ENCODE measurements at regions of chr16 and their contacts with region 1.

Region 1: DNA sequence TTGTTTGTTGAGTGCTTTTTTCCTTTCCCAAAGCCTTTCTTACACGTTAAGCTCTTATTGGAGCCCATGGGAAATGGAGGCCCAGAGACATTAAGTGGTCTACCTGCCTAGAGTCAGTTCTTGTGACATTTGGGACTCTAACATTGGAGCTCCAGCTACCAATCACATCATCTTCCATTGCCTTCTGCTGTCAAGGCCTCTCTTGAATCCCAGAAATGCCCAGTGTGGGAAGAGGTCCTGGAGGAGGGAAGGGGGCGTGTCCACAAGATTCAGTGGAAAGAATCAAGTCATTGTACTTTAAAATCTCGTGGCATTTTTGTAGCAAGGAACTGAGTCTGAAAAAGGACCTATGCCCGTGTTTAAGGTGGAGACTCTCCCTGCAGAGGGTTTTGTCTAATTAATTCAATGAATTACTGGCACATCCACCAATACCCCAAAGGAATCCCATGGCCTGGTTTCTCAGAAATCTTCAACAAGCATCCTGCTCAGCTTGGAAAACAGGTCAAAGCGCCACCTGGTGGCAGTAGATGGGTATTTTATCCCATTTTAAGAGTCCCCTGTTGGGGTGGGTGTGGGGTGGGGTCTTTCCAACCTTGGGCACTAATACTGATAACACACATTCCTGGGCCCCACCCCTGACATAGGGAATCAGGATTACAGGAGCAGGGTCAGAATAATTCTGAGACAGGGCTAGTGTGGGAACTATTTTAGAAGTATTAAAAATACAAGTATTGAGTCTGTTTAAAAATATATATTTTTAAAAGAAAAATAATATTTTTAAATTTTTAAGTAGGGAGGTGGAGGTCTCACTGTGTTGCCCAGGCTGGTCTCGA is 24.6 kb downstream of the GPT2 start:
- DNase-seq: no peak
- ATAC-seq: peak; percentile 68
- H3K4me3 ChIP-seq: no peak overlapping the region
- H3K27ac ChIP-seq: no peak overlapping the region
- H3K4me1 ChIP-seq: no peaks in the 10 kb centered on the region
- H3K27me3 ChIP-seq: no peaks in the 10 kb centered on the region

Region 2: GRCh38 chr16:46673320-46674013 is 235.3 kb before region 1 on chr16:
- intact Hi-C with region 1: loop called in 1 of 2 experiments (anchors 2 kb)
- DNase-seq: peak in 1 of 2 donors; percentile 58
- ATAC-seq: no peak
- H3K4me3 ChIP-seq: no peak overlapping the region
- H3K27ac ChIP-seq: no peak overlapping the region
- H3K4me1 ChIP-seq: no peaks in the 10 kb centered on the region
- H3K27me3 ChIP-seq: no peaks in the 10 kb centered on the region

Region 3: DNA sequence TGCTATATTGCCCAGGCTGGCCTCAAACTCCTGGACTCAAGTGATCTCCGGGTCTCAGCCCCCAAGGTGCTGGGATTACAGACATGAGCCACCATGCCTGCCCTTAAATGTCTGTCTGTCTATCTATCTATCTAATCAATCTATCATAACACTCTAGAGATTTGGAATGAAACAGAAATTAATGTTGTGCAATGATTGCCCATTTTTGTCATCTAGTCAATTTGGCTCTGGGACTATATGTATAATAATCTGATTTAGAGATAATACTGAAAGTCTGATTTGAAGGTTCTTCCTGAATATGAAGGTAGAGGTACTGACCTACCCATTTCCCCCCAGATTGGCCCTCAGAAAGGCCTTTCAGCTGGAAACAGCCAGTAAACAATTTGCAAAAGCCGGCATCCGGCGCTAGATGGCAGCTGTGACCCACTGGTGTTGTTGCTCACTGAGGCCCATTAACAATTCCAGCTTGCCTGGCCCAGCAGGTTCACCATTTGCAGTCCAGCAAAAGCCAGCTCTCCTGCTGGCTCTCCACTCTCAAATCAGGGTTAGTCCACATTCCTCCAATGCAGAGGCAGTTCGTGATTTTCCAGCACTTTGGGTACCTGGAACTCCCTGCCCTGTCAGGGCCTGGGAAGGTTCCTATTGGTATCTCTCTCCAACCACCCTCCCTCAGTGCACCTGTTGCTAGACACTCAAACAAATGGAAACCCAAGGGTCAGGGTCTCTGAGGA is 54.9 kb before region 1 on chr16:
- intact Hi-C with region 1: loop called (anchors 1 to 2 kb)
- DNase-seq: peak; percentile 81 to 89
- ATAC-seq: peak; percentile 75
- H3K4me3 ChIP-seq: no peak overlapping the region
- H3K27ac ChIP-seq: no peak overlapping the region
- H3K4me1 ChIP-seq: no peaks in the 10 kb centered on the region
- H3K27me3 ChIP-seq: no peaks in the 10 kb centered on the region

Measured in aorta (tissue), 5 donors.